ENCODE measurements at regions of chr11 and their contacts with region 1.

Region 1: DNA sequence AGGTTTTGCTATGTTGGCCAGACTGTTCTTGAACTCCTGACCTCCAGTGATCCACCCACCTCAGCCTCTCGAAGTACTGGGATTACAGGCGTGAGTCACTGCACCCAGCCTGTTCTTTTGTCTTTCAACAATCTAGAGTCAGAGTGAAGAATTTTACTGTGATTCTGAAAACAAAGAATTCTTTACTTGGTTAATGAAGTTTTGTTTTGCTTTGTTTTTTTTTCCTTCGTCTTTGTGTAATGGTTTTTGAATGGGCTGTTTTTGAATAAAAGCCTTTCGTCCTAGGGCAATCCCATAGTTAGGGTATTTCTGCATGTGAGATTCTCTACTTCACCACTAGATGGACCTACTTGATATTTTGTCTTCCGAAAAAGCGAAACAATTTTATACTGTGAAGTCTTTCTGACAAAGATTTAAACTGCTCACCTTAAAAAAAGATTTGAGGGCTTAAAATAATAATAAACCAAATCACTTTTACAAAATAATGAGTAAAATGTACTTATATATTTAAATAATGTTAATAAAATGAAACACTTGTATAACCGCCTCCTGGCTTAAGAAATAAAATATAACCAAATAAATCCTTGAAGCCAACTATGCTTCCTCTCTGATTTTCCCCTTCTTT is 43.4 kb upstream of the SC5D start:
- DNase-seq: no peak
- H3K4me3 Mint-ChIP-seq: no peak overlapping the region
- H3K27ac Mint-ChIP-seq: no peak overlapping the region
- H3K4me1 Mint-ChIP-seq: no peaks in the 10 kb centered on the region
- H3K27me3 Mint-ChIP-seq: no peaks in the 10 kb centered on the region

Region 2: GRCh38 chr11:121292495-121293287 is 43.5 kb after region 1 on chr11 and contains the start of gene SC5D:
- CTCF ChIA-PET with region 1: interaction called, 3 read pairs
- intact Hi-C with region 1: loop called (anchors 1 kb)
- DNase-seq: peak; percentile 97
- H3K4me3 Mint-ChIP-seq: peak within 1 kb of the TSS; percentile 90
- H3K27ac Mint-ChIP-seq: peak within 1 kb of the TSS; percentile 95
- H3K4me1 Mint-ChIP-seq: peaks cover 32% of the 10 kb centered on the region
- H3K27me3 Mint-ChIP-seq: no peaks in the 10 kb centered on the region
- total RNA-seq, gene SC5D: 29.6 to 31.7 TPM

Region 3: GRCh38 chr11:121591405-121592033 is 342.4 kb after region 1 on chr11:
- CTCF ChIA-PET with region 1: interaction called, 4 read pairs
- intact Hi-C with region 1: loop called (anchors 1 kb)
- DNase-seq: peak; percentile 87
- H3K4me3 Mint-ChIP-seq: no peak overlapping the region
- H3K27ac Mint-ChIP-seq: no peak overlapping the region
- H3K4me1 Mint-ChIP-seq: peaks cover 14% of the 10 kb centered on the region
- H3K27me3 Mint-ChIP-seq: no peaks in the 10 kb centered on the region

Measured in activated naive CD4-positive, alpha-beta T cell treated with anti-CD3 and anti-CD28 coated beads for 36 hours (primary cell).